ENCODE measurements at regions of chr3 and their contacts with region 1.

Region 1: DNA sequence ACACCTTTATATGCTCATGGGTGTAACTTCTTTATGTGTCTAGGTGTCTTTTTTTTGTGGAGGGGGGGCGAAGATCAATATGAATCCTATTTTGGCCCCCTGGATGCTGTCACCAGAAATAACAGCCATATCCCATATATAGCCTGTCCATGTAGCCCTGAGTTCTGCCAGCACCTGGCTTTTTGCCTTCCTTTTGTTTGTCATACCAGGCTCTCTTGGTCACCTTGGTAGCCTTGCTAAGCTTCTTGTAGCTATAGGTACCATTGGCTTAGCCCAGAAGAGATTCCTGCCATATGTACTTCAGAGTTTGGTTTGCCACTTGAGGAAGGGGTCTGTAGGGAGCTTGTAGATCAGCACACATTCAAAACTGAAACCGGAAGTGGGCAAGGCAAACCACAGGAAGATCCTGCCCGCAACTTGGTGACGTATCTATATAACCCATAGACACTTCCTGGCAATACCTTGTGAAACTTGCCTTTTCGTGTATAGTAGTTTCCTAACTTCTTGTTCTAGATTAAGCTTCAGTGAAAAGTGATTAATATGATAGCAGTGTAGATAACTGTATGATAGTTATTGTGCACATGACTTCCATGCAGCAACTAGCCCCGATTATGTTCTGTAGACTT is 11.9 kb downstream of the RASA2 start:
- DNase-seq: peak; percentile 34 to 96 (median 94)
- ATAC-seq: peak; percentile 91
- H3K4me3 ChIP-seq: peak overlapping the region; percentile 52
- H3K4me3 Mint-ChIP-seq: peak overlapping the region in 9 of 10 donors; percentile 68 to 89 (median 82)
- H3K27ac ChIP-seq: peak overlapping the region; percentile 73
- H3K27ac Mint-ChIP-seq: peak overlapping the region in 5 of 9 donors; percentile 93 to 99 (median 96)
- H3K4me1 ChIP-seq: peaks cover 66 to 69% of the 10 kb centered on the region in 2 donors
- H3K4me1 Mint-ChIP-seq: peaks cover 32 to 76% (median 50%) of the 10 kb centered on the region in 7 donors
- H3K27me3 ChIP-seq: no peaks in the 10 kb centered on the region
- H3K27me3 Mint-ChIP-seq: no peaks in the 10 kb centered on the region

Region 2: DNA sequence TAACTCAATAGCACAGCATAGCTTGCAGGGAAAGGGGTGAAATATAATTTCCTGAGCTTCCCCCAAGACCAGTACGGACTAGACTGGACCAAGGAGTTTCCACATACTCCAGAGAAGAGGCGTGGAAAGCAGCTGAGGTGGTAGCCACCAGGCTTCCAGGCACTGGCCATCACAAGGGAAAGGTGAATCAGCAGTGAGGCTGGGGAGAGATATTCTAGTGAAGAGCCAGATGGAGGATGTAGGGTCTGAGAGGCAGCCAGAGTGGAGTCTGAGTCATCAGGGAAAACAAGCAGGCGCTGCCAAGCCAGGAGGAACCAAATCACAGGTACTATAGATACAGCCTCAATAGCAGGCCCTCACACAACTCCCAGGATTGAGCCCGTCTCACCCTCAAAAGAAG is 21.5 kb before region 1 on chr3:
- CTCF ChIA-PET with region 1: interaction called, 4 read pairs
- POLR2A ChIA-PET with region 1: no interaction called
- intact Hi-C with region 1: loop called (anchors 1 kb)
- DNase-seq: no peak
- ATAC-seq: no peak
- H3K4me3 ChIP-seq: no peak overlapping the region
- H3K4me3 Mint-ChIP-seq: no peak overlapping the region
- H3K27ac ChIP-seq: no peak overlapping the region
- H3K27ac Mint-ChIP-seq: no peak overlapping the region
- H3K4me1 ChIP-seq: peaks cover 11% of the 10 kb centered on the region in 2 donors
- H3K4me1 Mint-ChIP-seq: peaks cover 24 to 46% (median 32%) of the 10 kb centered on the region in 7 donors
- H3K27me3 ChIP-seq: no peaks in the 10 kb centered on the region
- H3K27me3 Mint-ChIP-seq: peaks cover 0 to 21% (median 0%) of the 10 kb centered on the region in 5 donors

Region 3: DNA sequence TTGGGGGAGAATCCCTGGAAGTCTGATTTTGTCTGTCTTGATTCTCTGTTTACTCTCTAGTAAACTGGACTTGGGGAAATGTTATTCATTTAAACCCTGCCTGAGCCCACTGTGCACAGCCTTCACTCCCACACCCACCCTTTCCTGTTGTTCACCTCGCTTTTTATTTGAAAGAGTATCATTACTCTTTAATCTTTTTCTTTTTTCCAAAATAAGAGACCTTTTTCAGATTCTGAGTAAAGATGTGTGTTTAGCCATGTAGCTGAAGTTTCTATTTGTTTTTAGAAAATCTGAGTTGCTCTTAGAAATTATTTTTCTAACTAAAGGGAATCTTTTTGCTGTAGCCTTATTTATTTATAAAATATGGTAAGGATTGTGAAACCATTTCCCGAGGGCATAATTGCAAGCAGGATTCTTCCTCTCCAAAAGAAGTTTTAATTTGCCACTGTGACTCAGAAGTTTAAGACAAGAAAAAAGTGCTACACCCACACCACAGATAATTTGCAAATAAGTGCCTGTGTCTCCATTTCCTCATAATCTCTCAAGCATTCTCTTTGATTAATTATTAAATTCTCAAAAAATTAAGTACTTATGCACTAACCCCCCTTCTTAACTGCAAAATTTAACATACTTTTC is 31.5 kb after region 1 on chr3:
- CTCF ChIA-PET with region 1: interaction called, 3 read pairs
- POLR2A ChIA-PET with region 1: interaction called, 7 read pairs
- intact Hi-C with region 1: loop called in 1 of 2 experiments (anchors 1 kb)
- DNase-seq: peak in 6 of 9 donors; percentile 44 to 74 (median 60)
- ATAC-seq: peak; percentile 87
- H3K4me3 ChIP-seq: peak overlapping the region; percentile 4
- H3K4me3 Mint-ChIP-seq: peak overlapping the region; percentile 40 to 94 (median 82)
- H3K27ac ChIP-seq: peak overlapping the region; percentile 62
- H3K27ac Mint-ChIP-seq: peak overlapping the region in 8 of 9 donors; percentile 87 to 97 (median 94)
- H3K4me1 ChIP-seq: peaks cover 22 to 77% of the 10 kb centered on the region in 2 donors
- H3K4me1 Mint-ChIP-seq: peaks cover 40 to 86% (median 83%) of the 10 kb centered on the region in 7 donors
- H3K27me3 ChIP-seq: no peaks in the 10 kb centered on the region
- H3K27me3 Mint-ChIP-seq: no peaks in the 10 kb centered on the region

Region 4: DNA sequence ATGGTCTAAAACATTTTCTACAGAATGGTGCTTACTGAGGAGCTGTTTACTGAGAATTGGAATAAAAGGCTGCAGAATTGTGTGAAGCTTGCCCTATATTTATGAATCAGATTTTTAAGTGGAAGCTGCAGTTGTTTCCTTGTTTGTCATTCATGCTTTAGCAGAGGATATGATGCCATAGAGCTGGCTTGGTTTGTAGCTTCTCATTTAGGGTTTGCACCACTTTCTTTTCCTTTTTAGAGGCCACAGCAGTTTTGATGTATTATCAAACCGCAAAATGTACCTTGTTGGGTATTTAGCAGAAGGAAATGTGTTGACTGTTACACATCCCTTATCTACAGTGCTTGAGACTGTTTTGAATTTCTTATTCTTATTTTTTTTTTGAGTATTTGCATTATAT is 54.3 kb after region 1 on chr3:
- CTCF ChIA-PET with region 1: interaction called, 5 read pairs
- POLR2A ChIA-PET with region 1: interaction called, 16 read pairs
- intact Hi-C with region 1: loop called (anchors 1 kb)
- DNase-seq: peak in 7 of 9 donors; percentile 60 to 88 (median 78)
- ATAC-seq: peak; percentile 93
- H3K4me3 ChIP-seq: peak overlapping the region; percentile 12
- H3K4me3 Mint-ChIP-seq: peak overlapping the region in 9 of 10 donors; percentile 15 to 74 (median 53)
- H3K27ac ChIP-seq: peak overlapping the region; percentile 59
- H3K27ac Mint-ChIP-seq: peak overlapping the region; percentile 32 to 90 (median 77)
- H3K4me1 ChIP-seq: peaks cover 24 to 73% of the 10 kb centered on the region in 2 donors
- H3K4me1 Mint-ChIP-seq: peaks cover 36 to 72% (median 63%) of the 10 kb centered on the region in 7 donors
- H3K27me3 ChIP-seq: no peaks in the 10 kb centered on the region
- H3K27me3 Mint-ChIP-seq: no peaks in the 10 kb centered on the region

Region 5: DNA sequence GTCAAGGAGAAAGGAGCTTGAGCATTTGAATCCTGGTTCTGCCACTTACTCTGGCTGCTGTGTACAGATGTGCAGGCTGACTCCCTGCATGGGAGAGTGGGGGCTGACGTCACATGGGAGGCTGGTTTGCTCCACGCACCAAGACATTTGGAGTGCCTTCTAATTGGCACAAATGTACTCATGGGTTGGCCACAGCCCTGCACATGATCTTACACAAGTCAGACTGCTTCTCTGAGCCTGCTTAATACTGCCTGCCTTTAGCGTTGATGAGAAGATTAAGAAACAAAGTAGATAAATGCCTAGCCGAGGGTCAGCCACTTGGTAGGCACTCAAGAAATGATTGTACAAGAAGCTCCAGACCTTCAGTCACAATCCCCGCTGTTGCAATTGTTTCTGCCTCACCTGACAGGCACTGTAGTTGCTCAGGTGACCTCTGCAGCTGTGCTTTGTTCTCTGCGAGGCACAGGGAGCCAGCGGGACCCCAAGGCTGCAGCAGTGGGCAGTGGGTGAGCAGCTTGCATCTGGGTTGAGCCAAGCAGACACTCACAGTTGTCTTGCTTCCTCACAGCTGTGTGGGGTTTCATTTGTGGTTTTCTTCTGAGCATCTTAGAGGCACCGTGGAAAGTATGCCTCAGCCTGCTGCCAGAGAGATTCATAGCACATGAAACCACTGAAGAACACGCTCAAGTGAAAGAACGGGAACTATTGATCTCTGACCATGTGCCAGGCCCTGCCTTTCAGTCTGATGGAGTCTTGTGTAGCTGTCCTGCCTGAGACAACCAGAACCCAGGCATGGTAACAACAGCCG is 297.6 kb after region 1 on chr3:
- CTCF ChIA-PET with region 1: no interaction called
- POLR2A ChIA-PET with region 1: no interaction called
- intact Hi-C with region 1: loop called (anchors 2 to 10 kb)
- DNase-seq: peak; percentile 14 to 78 (median 61)
- ATAC-seq: peak; percentile 82
- H3K4me3 ChIP-seq: peak overlapping the region; percentile 68
- H3K4me3 Mint-ChIP-seq: peak overlapping the region; percentile 86 to 97 (median 90)
- H3K27ac ChIP-seq: peak overlapping the region; percentile 79
- H3K27ac Mint-ChIP-seq: peak overlapping the region; percentile 92 to 99 (median 97)
- H3K4me1 ChIP-seq: peaks cover 48 to 56% of the 10 kb centered on the region in 2 donors
- H3K4me1 Mint-ChIP-seq: peaks cover 45 to 71% (median 60%) of the 10 kb centered on the region in 7 donors
- H3K27me3 ChIP-seq: no peaks in the 10 kb centered on the region
- H3K27me3 Mint-ChIP-seq: peaks cover 0 to 2% (median 0%) of the 10 kb centered on the region in 5 donors

Region 6: DNA sequence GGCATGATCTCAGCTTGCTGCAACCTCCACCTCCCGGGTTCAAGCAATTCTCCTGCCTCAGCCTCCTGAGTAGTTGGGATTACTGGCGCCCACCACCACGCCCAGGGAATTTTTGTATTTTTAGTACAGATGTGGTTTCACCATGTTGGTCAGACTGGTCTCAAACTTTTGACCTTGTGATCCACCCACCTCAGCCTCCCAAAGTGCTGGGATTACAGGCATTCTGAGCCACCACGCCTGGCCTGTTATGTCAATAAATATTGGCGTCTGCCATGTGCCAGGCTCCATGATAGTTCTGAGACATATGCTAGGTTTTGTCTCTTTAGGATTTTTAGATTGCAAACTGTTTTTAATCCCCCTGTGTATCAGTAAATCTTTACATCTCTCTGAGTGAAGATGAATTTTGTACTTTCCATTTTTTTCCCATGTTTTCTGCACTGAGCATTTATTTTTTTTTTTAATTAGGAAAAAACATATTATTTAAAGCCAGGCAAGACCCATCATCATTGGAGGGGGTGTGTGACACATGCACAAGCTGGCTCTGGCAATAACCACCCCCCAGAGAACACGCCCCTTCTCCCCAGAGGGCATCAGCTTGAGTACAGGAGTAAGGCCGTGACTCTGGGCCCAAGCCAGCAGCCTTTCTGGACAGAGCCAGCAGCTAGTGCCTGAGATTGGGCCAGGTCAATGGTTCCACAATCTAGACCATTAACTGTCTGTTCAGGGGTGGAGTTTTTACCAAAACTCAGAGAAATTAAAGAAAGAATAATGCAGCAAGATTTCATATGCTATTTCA is 326.7 kb after region 1 on chr3:
- CTCF ChIA-PET with region 1: no interaction called
- POLR2A ChIA-PET with region 1: no interaction called
- intact Hi-C with region 1: no loop called
- DNase-seq: no peak
- ATAC-seq: no peak
- H3K4me3 ChIP-seq: no peak overlapping the region
- H3K4me3 Mint-ChIP-seq: no peak overlapping the region
- H3K27ac ChIP-seq: no peak overlapping the region
- H3K27ac Mint-ChIP-seq: no peak overlapping the region
- H3K4me1 ChIP-seq: no peaks in the 10 kb centered on the region
- H3K4me1 Mint-ChIP-seq: peaks cover 0 to 7% (median 0%) of the 10 kb centered on the region in 7 donors
- H3K27me3 ChIP-seq: no peaks in the 10 kb centered on the region
- H3K27me3 Mint-ChIP-seq: peaks cover 0 to 5% (median 0%) of the 10 kb centered on the region in 5 donors